ENCODE measurements at regions of chr9 and their contacts with region 1.

Region 1: DNA sequence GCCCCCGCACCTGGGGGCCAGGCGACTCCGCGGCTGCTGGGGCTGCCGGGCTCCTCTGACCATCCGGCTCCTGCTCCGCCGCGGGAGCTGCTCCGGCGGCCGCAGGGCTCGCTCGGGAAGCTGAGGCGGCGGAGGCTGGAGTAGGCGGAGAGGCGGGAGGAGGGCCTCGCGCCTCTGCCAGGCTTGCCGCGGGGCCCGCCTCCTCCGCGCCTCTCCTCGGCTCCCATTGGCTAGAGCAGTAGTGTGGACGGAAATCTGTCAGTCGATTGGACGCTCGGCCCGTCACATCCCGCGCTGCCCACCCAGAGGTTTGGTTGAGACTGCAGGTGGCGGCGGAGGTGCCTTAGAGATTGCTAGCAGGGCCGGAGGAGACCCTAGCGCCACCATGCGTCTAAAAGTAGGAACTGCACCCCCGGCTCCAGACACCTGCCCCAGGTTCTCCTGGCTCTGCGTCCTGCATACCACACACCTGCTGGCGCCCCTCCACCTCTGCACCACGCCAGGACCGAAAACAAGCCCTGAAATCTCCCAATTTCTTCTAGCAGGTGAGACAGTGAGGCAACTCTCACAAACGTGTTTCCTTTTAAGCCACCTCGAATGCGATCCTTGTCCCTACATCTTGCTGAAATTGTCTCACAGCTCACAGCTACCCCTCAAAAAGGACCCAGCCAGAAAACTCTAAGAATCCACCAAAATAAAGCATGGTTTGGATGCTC is at the start of gene SCAI:
- DNase-seq: peak; percentile 88
- H3K4me3 ChIP-seq: peak within 1 kb of the TSS; percentile 71
- CTCF ChIP-seq: peak; percentile 96

Region 2: GRCh38 chr9:125074976-125075375 is 68.6 kb before region 1 on chr9:
- CTCF ChIA-PET with region 1: no interaction called
- POLR2A ChIA-PET with region 1: no interaction called
- DNase-seq: peak; percentile 17
- H3K4me3 ChIP-seq: no peak overlapping the region
- CTCF ChIP-seq: no peak

Region 3: DNA sequence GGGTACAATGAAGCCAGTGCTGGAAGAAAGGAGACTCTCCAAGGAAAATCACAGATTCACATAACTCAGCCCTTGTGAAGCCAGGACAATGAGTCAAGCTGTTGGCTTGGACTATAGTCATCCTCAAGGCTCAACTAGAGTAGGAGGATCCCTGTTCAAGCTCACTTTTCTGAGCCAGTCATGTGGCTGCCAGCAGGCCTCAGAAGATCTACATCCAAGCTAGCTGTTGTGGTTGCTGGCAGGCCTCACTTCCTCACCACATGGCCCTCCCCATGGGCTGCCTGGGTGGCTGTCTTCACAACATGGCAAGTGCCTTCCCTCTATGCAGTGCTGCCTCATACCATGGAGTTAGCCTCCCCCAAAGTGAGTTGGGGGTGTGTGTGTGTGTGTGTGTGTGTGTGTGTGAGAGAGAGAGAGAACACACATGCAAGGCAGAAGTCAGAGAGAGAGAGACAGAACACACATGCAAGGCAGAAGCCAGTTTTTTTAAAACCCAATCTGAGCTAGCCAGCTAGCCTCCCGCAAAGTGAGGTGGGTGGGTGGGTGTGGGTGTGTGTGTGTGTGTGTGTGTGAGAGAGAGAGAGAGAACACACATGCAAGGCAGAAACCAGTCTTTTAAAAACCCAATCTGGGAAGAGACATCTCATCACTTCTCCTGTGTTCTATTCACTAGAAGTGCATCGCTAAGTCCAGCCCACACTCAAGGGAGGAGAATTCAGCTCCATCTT is 17.4 kb before region 1 on chr9:
- CTCF ChIA-PET with region 1: interaction called, 26 read pairs
- POLR2A ChIA-PET with region 1: interaction called, 6 read pairs
- DNase-seq: peak; percentile 98
- H3K4me3 ChIP-seq: peak overlapping the region; percentile 23; the same call in 1 of the 2 replicates
- CTCF ChIP-seq: no peak

Region 4: GRCh38 chr9:125153712-125154367 is 10.3 kb after region 1 on chr9:
- CTCF ChIA-PET with region 1: interaction called, 21 read pairs
- POLR2A ChIA-PET with region 1: no interaction called
- DNase-seq: no peak
- H3K4me3 ChIP-seq: no peak overlapping the region
- CTCF ChIP-seq: no peak

Region 5: GRCh38 chr9:125183054-125183453 is 39.5 kb after region 1 on chr9:
- CTCF ChIA-PET with region 1: no interaction called
- POLR2A ChIA-PET with region 1: no interaction called
- DNase-seq: no peak
- H3K4me3 ChIP-seq: no peak overlapping the region
- CTCF ChIP-seq: no peak